K562 (cell line): ENCODE measurements at regions of chr3 and their contacts with region 1.

Region 1: DNA sequence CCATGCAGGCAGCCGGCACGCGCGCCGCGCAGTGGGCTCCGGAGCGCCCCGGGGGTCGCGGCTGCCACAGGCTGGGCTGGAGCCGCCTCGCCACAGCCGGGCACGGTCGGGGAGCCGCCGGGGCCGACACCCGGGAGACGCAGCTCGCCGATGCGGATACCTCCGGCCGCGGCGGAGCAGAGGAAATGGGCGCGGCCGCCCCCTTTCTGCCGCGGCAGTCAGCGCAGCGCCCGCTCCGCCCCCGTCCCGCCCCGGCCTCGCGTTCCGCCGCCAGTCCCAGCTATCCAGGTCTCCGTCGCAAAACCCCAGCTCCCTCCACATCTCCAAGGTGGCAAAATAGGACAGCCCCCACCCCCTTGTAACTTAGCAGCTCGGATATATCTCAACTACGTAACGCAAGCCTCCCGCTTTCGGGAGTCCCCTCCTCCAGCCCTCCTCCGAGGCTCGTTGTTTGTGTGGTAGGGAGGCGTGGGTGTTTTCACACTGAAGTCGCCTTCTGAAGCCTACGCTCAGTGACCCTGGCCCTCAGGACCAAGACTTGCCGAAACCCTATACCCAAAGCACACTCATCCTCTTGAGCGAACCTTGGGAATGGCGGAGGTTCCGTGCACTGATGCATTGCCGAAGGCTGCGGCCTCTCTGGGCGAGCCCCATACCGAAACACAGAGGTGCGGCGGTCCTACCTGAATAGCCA is at the start of gene SH3BP5:
- DNase-seq: peak; percentile 89 to 93 (median 92)
- ATAC-seq: peak; percentile 98
- H3K4me3 ChIP-seq: peak within 1 kb of the TSS; percentile 85
- H3K27ac ChIP-seq: peak within 1 kb of the TSS; percentile 71
- H3K4me1 ChIP-seq: peaks cover 23 to 31% of the 10 kb centered on the region in 2 experiments
- H3K27me3 ChIP-seq: no peaks in the 10 kb centered on the region
- CTCF ChIP-seq: peak; percentile 69 to 88 (median 77)
- EP300 ChIP-seq: no peak
- POLR2A ChIP-seq: peak; percentile 54; the same call in 1 of the 2 replicates
- RAD21 ChIP-seq: peak; percentile 73 to 81
- polyA plus RNA-seq, gene SH3BP5: 2.9 to 3.5 TPM

Region 2: GRCh38 chr3:15309662-15310335 is 22.8 kb before region 1 on chr3:
- CTCF ChIA-PET with region 1: no interaction called
- POLR2A ChIA-PET with region 1: interaction called, 6 read pairs
- in situ Hi-C with region 1: no loop called
- intact Hi-C with region 1: loop called (anchors 2 kb)
- DNase-seq: no peak
- ATAC-seq: peak; percentile 13; the same call in 2 of the 3 replicates
- H3K4me3 ChIP-seq: no peak overlapping the region
- H3K27ac ChIP-seq: peak overlapping the region; percentile 77
- H3K4me1 ChIP-seq: peaks cover 60 to 87% of the 10 kb centered on the region in 2 experiments
- H3K27me3 ChIP-seq: no peaks in the 10 kb centered on the region
- CTCF ChIP-seq: no peak
- EP300 ChIP-seq: no peak
- POLR2A ChIP-seq: no peak
- RAD21 ChIP-seq: no peak

Region 3: DNA sequence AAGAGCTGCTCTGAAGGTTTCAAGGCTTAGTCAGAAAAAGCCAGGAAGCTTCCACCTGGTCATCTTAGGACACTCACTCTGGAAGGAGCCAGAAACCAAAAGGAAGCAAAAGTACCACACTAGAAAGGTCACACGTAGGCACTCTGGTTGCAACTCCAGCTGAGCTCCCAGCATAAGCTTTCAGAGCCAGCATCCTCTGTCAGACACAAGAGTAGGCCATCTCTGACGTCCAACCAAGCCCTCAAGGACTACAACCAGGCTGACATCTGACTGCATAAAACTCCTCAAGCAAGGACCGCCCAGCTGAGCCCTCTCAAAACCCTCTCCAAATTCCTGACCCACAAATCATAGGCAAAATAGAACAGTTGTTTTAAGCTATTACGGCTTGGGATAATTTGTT is 13.0 kb before region 1 on chr3:
- CTCF ChIA-PET with region 1: interaction called, 3 read pairs
- POLR2A ChIA-PET with region 1: interaction called, 19 read pairs
- in situ Hi-C with region 1: no loop called
- intact Hi-C with region 1: no loop called
- DNase-seq: no peak
- ATAC-seq: no peak
- H3K4me3 ChIP-seq: no peak overlapping the region
- H3K27ac ChIP-seq: no peak overlapping the region
- H3K4me1 ChIP-seq: peaks cover 20 to 23% of the 10 kb centered on the region in 2 experiments; a peak in 4 of 5 replicates
- H3K27me3 ChIP-seq: no peaks in the 10 kb centered on the region
- CTCF ChIP-seq: no peak
- EP300 ChIP-seq: no peak
- POLR2A ChIP-seq: no peak
- RAD21 ChIP-seq: no peak